Activated CD4-positive, alpha-beta T cell treated with anti-CD3 and anti-CD28 coated beads, Interleukin-2, amount 10 ng/mL, durations not matched to agents 24 days and 14 days (primary cell): ENCODE measurements at regions of chr6 and their contacts with region 1.

Region 1: DNA sequence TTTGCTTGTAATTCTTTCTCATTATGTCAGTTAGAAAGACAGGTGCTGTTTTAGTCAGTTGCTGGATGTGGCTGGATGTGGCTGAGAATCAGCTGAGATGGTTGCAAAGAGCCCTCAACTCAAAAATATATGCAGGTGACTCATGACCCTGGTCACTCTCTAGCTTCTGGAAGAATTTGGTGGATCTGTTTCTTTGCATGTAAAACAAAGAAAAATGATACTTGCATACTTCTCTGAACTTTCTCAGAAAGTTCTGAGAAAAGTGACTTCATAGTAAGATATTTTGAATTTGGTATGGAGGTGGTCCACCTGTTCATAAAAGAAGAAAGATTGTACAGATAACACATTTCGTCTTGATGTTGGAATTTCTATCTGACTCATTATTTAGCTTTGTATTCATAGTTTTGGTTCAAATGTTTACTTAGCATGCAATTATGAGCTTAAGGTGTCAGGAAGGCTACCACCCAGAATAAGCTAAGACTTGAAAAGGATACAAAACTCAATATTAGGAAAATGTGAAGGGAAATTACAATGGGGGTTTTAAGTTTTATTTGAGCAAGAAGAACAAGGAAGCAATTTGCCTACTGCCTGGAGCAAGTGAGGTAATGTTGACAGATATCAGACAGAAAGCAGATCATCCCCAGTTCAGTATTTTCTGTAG is 163.3 kb upstream of the OLIG3 start:
- DNase-seq: peak; percentile 79
- H3K4me3 Mint-ChIP-seq: peak overlapping the region; percentile 4
- H3K27ac Mint-ChIP-seq: peak overlapping the region; percentile 45
- H3K4me1 Mint-ChIP-seq: peaks cover 29% of the 10 kb centered on the region
- H3K27me3 Mint-ChIP-seq: no peaks in the 10 kb centered on the region

Region 2: DNA sequence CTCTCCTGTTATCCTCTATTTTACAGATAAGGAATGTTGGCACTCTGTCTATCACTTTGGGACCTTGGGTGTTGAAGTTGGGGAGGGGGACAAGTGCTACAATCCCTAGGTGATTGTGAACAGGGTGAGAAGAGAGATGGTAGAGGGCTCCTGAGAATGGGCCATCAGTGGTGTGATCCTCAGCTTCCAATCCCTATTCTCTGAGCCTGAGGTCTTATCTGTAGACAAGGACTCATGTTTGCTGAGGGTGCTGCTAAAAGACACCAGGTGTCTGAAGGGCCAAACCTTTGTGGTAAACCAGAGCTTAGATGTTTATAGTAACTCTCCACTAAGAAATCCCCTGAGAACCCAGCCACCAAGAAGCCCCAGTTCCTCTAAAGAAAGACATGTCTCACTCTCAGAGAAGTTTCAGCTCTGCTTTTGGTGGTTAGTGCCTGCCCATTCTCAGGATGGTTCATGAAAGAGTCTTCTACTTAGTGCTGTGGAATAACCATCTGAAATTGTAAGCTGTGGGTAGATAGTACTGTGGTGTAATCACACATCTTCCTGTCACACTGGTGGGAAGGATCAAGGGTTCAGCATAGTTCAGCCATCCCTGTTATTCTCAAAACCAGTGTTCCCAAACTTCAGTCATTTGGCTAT is 554.5 kb before region 1 on chr6:
- intact Hi-C with region 1: loop called (anchors 5 kb)
- DNase-seq: peak; percentile 81
- H3K4me3 Mint-ChIP-seq: peak overlapping the region; percentile 33
- H3K27ac Mint-ChIP-seq: peak overlapping the region; percentile 83
- H3K4me1 Mint-ChIP-seq: peaks cover 38% of the 10 kb centered on the region
- H3K27me3 Mint-ChIP-seq: no peaks in the 10 kb centered on the region

Region 3: GRCh38 chr6:137641474-137642077 is 15.9 kb before region 1 on chr6:
- intact Hi-C with region 1: no loop called
- DNase-seq: peak; percentile 89
- H3K4me3 Mint-ChIP-seq: no peak overlapping the region
- H3K27ac Mint-ChIP-seq: no peak overlapping the region
- H3K4me1 Mint-ChIP-seq: peaks cover 13% of the 10 kb centered on the region
- H3K27me3 Mint-ChIP-seq: peaks cover 9% of the 10 kb centered on the region